Thyroid gland (tissue), 4 donors: ENCODE measurements at regions of chr14 and their contacts with region 1.

Region 1: DNA sequence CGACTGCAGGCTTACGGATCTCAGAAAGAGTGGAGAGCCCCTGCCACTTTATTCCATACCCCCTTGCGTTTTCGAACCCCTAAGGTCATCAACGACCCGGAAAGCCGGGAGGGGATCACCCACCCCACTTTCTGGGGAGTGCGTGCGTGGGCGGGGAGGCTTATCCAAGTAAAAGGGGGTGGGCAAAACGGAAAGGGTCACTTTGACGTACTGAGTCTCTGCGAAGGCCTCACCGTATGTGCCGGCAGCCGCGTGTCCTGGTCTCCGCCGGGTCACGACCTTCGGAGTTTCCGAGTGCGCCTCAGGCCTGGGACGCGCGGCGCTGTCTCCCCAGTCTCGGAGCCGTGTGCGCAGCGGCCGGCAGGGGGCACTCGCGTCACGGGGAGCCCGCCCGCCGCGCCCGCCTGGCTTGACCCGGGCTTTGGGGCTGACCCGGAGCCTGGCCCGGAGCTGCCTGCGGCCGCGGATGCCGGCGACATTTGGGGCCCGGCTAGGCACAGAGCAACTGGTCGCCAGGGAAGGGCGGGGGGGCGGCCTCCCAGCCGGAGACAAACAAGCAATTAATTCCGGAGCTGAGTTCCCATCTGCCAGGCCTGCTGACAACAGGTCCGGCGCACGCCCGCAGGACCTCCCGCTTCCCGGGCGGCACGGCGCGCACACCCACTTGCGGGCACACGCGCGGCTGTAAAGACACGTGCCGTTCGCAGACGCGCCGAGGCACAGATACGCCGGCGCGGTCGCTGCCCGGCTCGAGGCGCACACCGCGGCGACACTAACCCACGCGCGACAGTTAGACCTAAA is 890 bp upstream of the KIF26A start:
- DNase-seq: peak; percentile 55 to 57
- H3K4me3 ChIP-seq: peak overlapping the region in 1 of 3 donors; percentile 38
- H3K27ac ChIP-seq: peak overlapping the region in 2 of 3 donors; percentile 5 to 25
- H3K4me1 ChIP-seq: peaks cover 18 to 39% of the 10 kb centered on the region in 2 donors
- H3K27me3 ChIP-seq: peaks cover 17% of the 10 kb centered on the region
- CTCF ChIP-seq: peak; percentile 35 to 94 (median 89)
- POLR2A ChIP-seq: no peak

Region 2: GRCh38 chr14:103594265-103594664 is 543.2 kb before region 1 on chr14:
- intact Hi-C with region 1: no loop called
- DNase-seq: no peak
- H3K4me3 ChIP-seq: no peak overlapping the region
- H3K27ac ChIP-seq: no peak overlapping the region
- H3K4me1 ChIP-seq: peaks cover 0 to 4% of the 10 kb centered on the region in 2 donors
- H3K27me3 ChIP-seq: no peaks in the 10 kb centered on the region
- CTCF ChIP-seq: no peak
- POLR2A ChIP-seq: no peak

Region 3: DNA sequence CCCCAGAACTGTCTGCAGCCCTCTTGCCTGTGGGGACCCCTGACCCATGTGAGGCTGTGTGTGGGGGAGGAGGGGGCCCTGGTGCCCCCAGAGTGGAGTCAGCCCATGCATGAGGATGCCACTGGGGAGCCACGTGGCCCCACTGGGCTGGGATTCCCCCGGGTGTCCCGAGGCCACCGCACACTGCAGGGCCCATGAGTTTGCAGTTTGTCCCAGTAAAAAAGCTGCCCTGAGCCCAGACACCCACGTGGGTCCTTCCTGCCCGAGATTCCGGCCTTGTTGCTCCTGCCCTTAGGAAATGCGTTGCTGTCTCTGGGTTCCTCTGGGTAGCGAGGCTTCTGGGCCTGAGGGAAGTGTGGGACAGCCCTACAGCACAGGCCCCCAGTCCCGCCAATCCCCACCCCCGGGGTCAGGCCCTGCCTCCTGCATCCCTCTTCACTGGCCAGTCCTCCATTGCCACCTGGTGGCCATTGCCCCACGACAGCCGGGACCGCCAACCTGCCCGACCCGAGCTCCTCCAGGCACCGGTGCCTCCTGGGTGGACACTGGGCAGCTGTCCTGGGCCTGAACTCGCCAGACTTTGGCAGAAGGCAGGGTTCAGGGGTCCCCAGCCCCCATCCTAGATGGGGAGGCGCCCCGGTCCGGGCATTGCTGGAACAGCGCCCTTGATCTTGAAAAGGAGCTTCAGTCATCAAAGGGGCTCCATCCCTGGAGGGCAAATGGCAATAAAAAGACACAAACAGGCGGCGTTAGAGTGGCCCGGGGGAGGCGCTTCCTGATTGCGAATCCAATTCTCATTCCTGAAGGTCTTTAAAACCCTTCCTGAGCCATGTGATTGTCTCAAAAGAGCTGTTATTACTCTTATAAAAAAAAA is 426.5 kb after region 1 on chr14:
- intact Hi-C with region 1: loop called (anchors 2 kb)
- DNase-seq: peak; percentile 73 to 77
- H3K4me3 ChIP-seq: no peak overlapping the region
- H3K27ac ChIP-seq: no peak overlapping the region
- H3K4me1 ChIP-seq: peaks cover 7 to 50% of the 10 kb centered on the region in 2 donors
- H3K27me3 ChIP-seq: no peaks in the 10 kb centered on the region
- CTCF ChIP-seq: peak; percentile 70 to 88 (median 82)
- POLR2A ChIP-seq: no peak

Region 4: DNA sequence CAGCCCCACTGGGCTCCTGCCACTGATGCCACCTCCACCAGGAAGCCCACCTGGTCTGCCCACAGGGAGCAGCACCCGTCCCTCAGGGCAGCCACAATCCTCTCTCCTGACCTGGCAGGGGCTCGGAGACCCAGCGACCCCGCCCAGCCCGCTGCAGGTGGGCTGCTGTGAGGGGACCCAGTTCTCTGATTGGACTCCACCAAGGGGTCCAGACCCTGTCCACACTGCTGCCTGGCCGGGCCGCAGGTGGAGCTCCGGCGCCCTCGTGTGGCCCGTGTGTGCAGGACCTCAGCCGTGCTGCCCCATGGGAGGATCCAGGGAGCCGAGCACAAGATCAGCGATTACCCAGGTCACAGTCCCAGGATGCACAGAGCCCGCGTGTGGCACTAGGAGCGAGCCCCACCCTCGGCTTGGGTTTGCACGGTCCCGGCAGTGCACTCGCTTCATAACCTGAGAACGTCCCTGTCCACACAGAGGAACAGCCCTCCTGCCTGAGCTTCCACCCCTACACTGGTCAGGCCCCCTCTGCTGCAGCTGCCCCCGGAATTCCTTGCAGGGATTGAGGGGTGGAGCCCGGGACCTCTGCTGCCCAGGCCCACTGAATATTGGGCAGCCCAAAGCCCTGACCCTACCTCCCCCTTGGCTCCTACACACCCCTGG is 502.5 kb after region 1 on chr14:
- intact Hi-C with region 1: loop called (anchors 5 kb)
- DNase-seq: peak; percentile 53 to 54
- H3K4me3 ChIP-seq: no peak overlapping the region
- H3K27ac ChIP-seq: no peak overlapping the region
- H3K4me1 ChIP-seq: no peaks in the 10 kb centered on the region
- H3K27me3 ChIP-seq: no peaks in the 10 kb centered on the region
- CTCF ChIP-seq: peak; percentile 59 to 94 (median 74)
- POLR2A ChIP-seq: no peak